ENCODE measurements at regions of chr1 and their contacts with region 1.

Region 1: DNA sequence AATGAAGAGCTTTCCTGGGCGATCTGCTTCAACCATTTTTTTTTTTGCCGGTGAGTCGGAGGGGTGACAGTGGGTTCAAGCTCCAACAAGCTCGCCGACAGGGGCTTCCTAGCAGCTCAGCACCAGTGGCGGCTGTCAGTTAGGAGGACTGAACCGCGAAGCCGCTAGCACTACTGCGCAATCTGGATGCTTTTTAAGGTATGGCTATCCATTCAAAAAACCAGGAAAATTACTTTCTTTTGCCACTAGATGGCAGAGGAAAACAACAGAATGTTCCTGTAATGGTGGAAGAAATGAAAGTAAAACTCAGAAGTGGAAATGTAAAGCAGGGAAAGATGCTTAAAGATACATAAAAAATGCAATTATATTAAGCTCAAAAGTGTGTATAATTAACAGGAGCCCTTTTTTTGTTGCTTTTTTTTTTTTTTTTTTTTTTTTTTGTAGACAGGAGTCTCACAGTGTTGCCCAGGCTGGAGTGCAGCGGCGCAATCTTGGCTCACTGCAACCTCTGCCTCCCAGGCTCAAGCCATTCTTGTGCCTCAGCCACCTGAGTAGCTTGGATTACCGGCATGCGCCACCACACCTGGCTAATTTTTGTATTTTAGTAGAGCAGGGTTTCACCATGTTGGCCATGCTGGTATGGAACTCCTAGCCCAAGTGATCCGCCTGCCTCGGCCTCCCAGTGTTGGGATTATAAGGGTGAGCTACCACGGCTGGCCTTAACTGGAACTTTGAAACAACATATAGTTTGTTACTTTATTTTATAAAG is 8.5 kb downstream of the KYAT3 start:
- DNase-seq: no peak
- H3K4me3 Mint-ChIP-seq: peak overlapping the region; percentile 41
- H3K27ac Mint-ChIP-seq: peak overlapping the region; percentile 44
- H3K4me1 Mint-ChIP-seq: peaks cover 73% of the 10 kb centered on the region
- H3K27me3 Mint-ChIP-seq: no peaks in the 10 kb centered on the region

Region 2: DNA sequence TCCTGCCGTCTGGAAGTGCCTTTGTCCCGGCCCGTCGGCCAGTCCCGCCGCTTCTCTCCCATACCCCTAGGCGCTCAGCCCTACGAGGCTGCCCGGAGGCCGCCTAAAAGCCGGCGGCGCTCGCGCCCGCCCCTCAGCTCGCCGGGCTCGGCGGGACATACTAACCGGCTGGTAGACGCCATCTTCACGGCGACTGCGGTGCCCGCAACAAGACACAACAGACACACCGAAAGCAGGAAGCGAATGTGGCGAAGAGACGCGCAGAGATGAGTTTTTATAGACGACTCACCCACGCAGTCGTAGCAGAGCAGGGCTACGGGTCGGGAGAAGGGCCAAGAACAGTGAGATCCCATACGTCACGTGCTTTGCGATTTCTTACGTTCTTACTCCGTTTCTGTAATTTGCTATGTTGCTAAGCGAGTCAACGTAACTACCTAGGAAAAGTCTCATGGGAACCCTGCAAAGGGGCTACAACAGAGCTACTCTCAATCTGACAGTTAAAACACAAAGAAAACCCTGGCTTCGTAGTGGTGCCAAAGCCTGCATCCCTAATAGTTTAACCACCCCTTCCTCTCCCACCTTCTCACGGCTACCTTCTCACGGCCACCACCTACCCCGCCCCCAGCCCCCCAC is 92.5 kb before region 1 on chr1 and contains the start of gene GTF2B:
- intact Hi-C with region 1: loop called (anchors 5 kb)
- DNase-seq: peak; percentile 93
- H3K4me3 Mint-ChIP-seq: peak within 1 kb of the TSS; percentile 97
- H3K27ac Mint-ChIP-seq: peak within 1 kb of the TSS; percentile 96
- H3K4me1 Mint-ChIP-seq: peaks cover 37% of the 10 kb centered on the region
- H3K27me3 Mint-ChIP-seq: peaks cover 2% of the 10 kb centered on the region
- total RNA-seq, gene GTF2B: 37.6 and 42.2 TPM in 2 replicates

Region 3: DNA sequence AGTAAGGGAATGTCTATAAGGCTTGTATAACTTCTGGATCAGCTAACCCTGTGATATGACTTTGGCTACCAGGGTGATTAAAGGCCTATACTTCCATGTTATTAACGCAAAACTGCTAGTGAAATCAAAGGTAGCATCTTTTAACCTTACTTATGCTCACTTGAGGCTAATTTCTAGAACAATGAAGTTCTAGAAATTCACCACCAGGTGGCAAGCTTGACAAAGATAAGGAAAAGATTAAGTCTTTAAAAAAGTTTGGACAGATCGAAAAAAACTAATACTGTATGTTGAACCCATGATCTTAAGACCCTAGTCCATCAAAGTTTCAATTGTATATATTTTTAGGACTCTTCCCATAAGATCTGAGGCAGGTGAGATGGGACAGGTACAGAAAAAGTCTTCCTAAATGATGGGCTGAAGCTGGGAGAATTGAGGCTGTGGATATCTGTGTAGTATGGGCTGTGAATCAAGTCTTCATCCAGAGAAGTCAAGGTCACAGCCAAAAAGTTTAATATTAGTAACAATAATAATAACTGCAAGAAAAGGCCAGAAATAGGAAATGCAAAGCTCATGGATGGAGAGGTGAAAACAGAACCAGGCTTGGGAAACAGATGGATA is 10.3 kb before region 1 on chr1:
- intact Hi-C with region 1: loop called (anchors 1 kb)
- DNase-seq: no peak
- H3K4me3 Mint-ChIP-seq: no peak overlapping the region
- H3K27ac Mint-ChIP-seq: no peak overlapping the region
- H3K4me1 Mint-ChIP-seq: peaks cover 24% of the 10 kb centered on the region
- H3K27me3 Mint-ChIP-seq: no peaks in the 10 kb centered on the region